Thyroid gland (tissue), 4 donors: ENCODE measurements at regions of chr12 and their contacts with region 1.

Region 1: GRCh38 chr12:101299931-101300330 is 20.0 kb downstream of the UTP20 start:
- DNase-seq: no peak
- H3K4me3 ChIP-seq: no peak overlapping the region
- H3K27ac ChIP-seq: no peak overlapping the region
- H3K4me1 ChIP-seq: no peaks in the 10 kb centered on the region
- H3K27me3 ChIP-seq: no peaks in the 10 kb centered on the region
- CTCF ChIP-seq: no peak
- POLR2A ChIP-seq: no peak

Region 2: DNA sequence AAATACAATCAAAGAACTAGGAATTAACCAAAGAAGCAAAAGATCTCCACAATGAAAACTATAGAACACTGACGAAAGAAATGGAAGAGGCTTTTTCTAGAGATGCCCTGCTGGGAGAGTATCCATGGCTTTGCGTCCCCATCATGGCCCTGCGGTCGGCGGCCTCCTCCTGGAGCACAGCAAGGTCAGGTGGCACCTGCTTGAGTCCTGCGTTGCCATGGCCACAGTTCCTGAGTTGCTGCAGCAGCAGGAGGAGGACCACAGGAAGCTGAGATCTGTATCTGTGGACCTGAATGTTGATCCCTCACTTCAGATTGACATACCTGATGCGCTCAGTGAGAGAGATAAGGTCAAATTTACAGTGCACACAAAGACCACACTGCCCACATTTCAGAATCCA is 233.4 kb before region 1 on chr12:
- intact Hi-C with region 1: no loop called
- DNase-seq: no peak
- H3K4me3 ChIP-seq: no peak overlapping the region
- H3K27ac ChIP-seq: no peak overlapping the region
- H3K4me1 ChIP-seq: no peaks in the 10 kb centered on the region
- H3K27me3 ChIP-seq: no peaks in the 10 kb centered on the region
- CTCF ChIP-seq: no peak
- POLR2A ChIP-seq: no peak

Region 3: DNA sequence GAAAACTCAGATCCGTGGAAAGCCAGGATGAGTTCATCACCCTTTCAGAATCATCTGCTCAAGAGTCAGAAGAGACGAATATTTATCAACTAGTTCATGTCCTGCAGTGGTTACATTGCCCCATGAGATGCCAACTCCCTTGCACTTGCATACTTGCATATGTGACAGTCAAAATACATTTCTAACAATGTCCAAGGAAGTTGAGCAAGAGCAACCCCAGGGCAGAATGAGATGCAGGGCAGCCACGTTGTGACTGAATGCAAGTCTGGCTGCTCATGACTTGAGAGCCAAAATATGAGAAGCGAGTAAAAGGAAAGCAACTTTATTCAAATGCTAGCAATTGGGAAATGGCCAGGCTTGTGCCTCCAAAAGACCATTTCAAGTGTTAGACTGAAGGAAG is 43.7 kb before region 1 on chr12:
- intact Hi-C with region 1: loop called (anchors 5 kb)
- DNase-seq: no peak
- H3K4me3 ChIP-seq: no peak overlapping the region
- H3K27ac ChIP-seq: no peak overlapping the region
- H3K4me1 ChIP-seq: no peaks in the 10 kb centered on the region
- H3K27me3 ChIP-seq: no peaks in the 10 kb centered on the region
- CTCF ChIP-seq: no peak
- POLR2A ChIP-seq: no peak